Heart left ventricle (tissue), 16 donors: ENCODE measurements at regions of chr21 and their contacts with region 1.

Region 1: GRCh38 chr21:15592271-15592860 is 137.4 kb upstream of the USP25 start:
- DNase-seq: no peak
- ATAC-seq: peak in 1 of 4 donors; percentile 50
- H3K4me3 ChIP-seq: no peak overlapping the region
- H3K27ac ChIP-seq: no peak overlapping the region
- H3K4me1 ChIP-seq: no peaks in the 10 kb centered on the region
- H3K27me3 ChIP-seq: no peaks in the 10 kb centered on the region
- CTCF ChIP-seq: peak in 11 of 12 donors; percentile 28 to 68 (median 57)
- POLR2A ChIP-seq: no peak

Region 2: GRCh38 chr21:14251336-14251735 is 1341.0 kb before region 1 on chr21:
- intact Hi-C with region 1: loop called in 9 of 10 experiments (anchors 5 to 10 kb)
- DNase-seq: no peak
- ATAC-seq: no peak
- H3K4me3 ChIP-seq: no peak overlapping the region
- H3K27ac ChIP-seq: no peak overlapping the region
- H3K4me1 ChIP-seq: peaks cover 0 to 4% (median 0%) of the 10 kb centered on the region in 12 donors
- H3K27me3 ChIP-seq: peaks cover 0 to 6% (median 0%) of the 10 kb centered on the region in 9 donors
- CTCF ChIP-seq: no peak
- POLR2A ChIP-seq: no peak

Region 3: GRCh38 chr21:14259747-14260146 is 1332.6 kb before region 1 on chr21:
- intact Hi-C with region 1: loop called (anchors 1 to 10 kb)
- DNase-seq: no peak
- ATAC-seq: peak in 3 of 4 donors; percentile 53 to 70 (median 62)
- H3K4me3 ChIP-seq: no peak overlapping the region
- H3K27ac ChIP-seq: no peak overlapping the region
- H3K4me1 ChIP-seq: no peaks in the 10 kb centered on the region
- H3K27me3 ChIP-seq: peaks cover 0 to 6% (median 0%) of the 10 kb centered on the region in 9 donors
- CTCF ChIP-seq: peak; percentile 37 to 73 (median 53)
- POLR2A ChIP-seq: no peak

Region 4: GRCh38 chr21:14403681-14404318 is 1188.6 kb before region 1 on chr21:
- intact Hi-C with region 1: loop called in 6 of 10 experiments (anchors 5 to 10 kb)
- DNase-seq: no peak
- ATAC-seq: no peak
- H3K4me3 ChIP-seq: no peak overlapping the region
- H3K27ac ChIP-seq: no peak overlapping the region
- H3K4me1 ChIP-seq: no peaks in the 10 kb centered on the region
- H3K27me3 ChIP-seq: no peaks in the 10 kb centered on the region
- CTCF ChIP-seq: peak; percentile 29 to 67 (median 52)
- POLR2A ChIP-seq: no peak